Common myeloid progenitor, CD34-positive (primary cell): ENCODE measurements at regions of chr15 and their contacts with region 1.

Region 1: GRCh38 chr15:91007266-91007665 is 12.9 kb upstream of the PRC1 start:
- DNase-seq: no peak
- H3K4me3 ChIP-seq: no peak overlapping the region
- H3K27ac ChIP-seq: no peak overlapping the region
- H3K4me1 ChIP-seq: no peaks in the 10 kb centered on the region
- H3K27me3 ChIP-seq: no peaks in the 10 kb centered on the region

Region 2: DNA sequence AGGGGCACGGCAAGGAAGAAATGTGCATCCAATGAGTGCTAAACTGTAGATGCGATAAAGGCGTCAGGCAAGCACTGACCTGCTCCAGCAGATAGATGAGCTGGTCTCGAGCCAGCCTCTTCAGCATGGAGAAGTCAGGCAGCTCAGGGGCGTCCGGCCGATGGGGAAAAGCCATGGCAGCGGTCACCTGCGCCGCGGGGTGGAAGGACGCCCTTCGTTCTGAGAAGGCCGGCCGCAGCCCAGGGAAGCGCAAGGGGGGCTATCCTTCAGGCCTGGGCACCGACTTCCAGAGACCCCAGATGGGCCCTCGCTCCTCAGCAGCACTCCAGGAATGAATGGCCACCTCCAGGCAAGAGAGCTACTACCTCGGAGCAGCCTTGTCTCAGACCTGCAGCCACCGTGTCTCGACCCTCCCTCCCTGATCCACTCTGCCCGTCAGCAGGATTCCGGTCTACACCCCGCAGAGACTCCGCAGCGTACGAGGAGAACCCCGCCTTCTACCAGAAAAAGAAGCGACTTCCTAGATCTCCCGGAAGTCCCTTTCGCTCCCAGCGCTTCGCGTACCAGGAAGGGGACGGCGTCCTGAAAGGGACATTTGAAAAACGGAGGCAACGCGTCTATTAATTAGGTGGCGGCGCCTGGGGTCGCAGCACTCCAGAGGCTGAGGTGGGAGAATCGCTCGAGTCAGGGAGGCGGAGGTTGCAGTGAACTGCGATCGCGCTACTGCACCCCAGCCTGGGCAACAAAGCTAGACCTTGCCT is 15.0 kb after region 1 on chr15 and contains the start of gene VPS33B:
- CTCF ChIA-PET with region 1: interaction called, 11 read pairs
- POLR2A ChIA-PET with region 1: interaction called, 4 read pairs
- DNase-seq: peak; percentile 91 to 94 (median 92)
- H3K4me3 ChIP-seq: peak within 1 kb of the TSS; percentile 82 to 99 (median 95)
- H3K27ac ChIP-seq: peak within 1 kb of the TSS; percentile 53 to 86
- H3K4me1 ChIP-seq: peaks cover 9 to 24% (median 16%) of the 10 kb centered on the region in 4 experiments
- H3K27me3 ChIP-seq: no peaks in the 10 kb centered on the region